ENCODE measurements at regions of chr19 and their contacts with region 1.

Region 1: DNA sequence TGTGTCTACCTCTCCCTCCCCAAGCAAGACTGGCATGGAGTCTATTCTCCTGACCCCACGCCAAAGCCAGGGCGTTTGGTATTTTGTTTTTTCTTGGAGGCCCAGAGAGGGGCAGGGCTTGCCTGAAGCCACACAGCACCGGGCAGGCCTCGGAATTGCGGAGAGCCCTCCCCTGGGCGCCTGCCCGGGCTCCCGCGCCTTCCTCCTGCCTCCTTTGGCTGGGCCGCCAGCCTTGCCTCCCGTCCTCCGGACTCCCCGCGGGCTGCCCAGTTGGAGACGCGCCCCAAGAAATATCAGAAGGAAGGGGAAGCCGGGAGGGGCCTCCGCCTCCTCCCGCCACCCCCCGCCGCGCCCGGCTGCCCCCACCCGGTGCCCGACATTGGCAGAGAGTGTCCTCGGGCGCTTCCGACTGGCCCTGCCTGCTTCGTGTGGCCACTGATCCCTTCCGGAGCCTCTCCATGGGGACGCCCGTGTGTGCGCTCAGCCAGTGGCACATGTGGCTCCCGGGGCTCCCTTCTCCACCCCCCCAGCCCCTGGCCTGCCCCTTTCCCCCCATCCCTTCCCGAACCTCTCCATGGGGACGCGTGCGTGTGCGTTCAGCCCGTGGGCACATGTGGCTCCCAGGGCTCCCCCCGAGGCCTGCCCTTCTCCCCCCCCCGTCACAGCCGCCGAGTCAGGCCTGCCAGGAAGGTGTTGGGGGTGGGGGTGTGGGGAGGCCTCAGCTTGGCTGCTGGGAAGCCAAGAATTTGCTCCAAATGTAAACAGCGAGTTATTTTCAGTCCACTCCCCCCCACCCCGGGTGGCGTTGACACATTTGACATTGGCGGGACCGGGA is 37.3 kb downstream of the NFIC start:
- DNase-seq: peak; percentile 92 to 98 (median 96)
- H3K4me3 ChIP-seq: peak overlapping the region in 1 of 4 donors; percentile 52
- H3K27ac ChIP-seq: peak overlapping the region; percentile 98 to 100 (median 99)
- H3K4me1 ChIP-seq: peaks cover 39 to 71% of the 10 kb centered on the region in 2 donors
- H3K27me3 ChIP-seq: no peaks in the 10 kb centered on the region
- CTCF ChIP-seq: no peak
- POLR2A ChIP-seq: peak in 1 of 2 donors; percentile 40

Region 2: DNA sequence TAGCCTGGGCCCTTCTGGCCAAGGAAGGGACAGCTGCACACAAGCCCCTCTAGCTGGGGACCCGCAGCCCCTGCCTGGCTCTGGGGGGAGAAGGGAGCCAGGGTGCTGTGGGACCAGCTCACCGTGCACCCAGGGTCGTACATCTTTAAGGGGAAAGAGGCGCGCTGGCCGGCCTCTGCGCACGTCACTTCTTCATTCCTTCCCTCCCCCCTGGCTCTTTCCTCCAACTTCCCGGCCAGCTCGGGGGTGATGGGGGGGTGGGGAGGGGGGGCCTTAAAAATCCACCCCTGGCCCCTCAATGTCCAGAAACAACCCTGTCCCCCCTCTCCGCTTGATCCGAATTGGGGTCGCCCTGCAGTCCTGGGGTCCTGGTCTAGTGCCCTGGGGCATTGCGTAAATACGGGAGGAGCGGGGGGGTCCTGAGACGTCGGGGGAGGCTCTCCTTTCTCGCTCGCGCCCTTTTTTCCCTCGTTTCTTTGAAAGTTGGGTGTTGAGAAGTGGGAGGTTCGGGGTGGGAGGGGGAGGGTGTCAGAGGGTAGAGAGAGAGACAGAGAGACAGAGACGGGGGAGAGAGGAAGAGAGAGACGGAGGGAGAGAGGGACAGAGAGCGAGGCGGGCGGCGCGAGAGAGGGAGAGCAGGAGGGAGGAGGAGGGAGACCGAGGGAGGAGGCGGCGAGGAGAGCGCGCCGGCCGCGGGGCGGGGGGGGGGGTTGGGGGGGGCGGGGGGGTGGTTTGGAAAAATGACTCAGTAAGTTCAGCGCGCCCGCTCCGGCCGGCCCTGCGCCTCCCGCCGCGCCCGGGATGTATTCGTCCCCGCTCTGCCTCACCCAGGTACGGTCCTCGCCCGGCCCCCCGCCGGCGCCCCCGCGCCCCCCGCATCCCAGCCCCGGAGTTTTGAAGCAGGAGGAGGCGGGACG is 37.6 kb before region 1 on chr19 and contains the start of gene NFIC:
- intact Hi-C with region 1: loop called in 1 of 2 experiments (anchors 5 kb)
- DNase-seq: peak; percentile 81 to 91 (median 85)
- H3K4me3 ChIP-seq: peak within 1 kb of the TSS; percentile 72 to 94 (median 83)
- H3K27ac ChIP-seq: peak within 1 kb of the TSS; percentile 95 to 100 (median 98)
- H3K4me1 ChIP-seq: peaks cover 48 to 58% of the 10 kb centered on the region in 2 donors
- H3K27me3 ChIP-seq: no peaks in the 10 kb centered on the region
- CTCF ChIP-seq: no peak
- POLR2A ChIP-seq: peak in 1 of 2 donors; percentile 57
- total RNA-seq, gene NFIC: 3.5 to 329 (median 214) TPM

Region 3: DNA sequence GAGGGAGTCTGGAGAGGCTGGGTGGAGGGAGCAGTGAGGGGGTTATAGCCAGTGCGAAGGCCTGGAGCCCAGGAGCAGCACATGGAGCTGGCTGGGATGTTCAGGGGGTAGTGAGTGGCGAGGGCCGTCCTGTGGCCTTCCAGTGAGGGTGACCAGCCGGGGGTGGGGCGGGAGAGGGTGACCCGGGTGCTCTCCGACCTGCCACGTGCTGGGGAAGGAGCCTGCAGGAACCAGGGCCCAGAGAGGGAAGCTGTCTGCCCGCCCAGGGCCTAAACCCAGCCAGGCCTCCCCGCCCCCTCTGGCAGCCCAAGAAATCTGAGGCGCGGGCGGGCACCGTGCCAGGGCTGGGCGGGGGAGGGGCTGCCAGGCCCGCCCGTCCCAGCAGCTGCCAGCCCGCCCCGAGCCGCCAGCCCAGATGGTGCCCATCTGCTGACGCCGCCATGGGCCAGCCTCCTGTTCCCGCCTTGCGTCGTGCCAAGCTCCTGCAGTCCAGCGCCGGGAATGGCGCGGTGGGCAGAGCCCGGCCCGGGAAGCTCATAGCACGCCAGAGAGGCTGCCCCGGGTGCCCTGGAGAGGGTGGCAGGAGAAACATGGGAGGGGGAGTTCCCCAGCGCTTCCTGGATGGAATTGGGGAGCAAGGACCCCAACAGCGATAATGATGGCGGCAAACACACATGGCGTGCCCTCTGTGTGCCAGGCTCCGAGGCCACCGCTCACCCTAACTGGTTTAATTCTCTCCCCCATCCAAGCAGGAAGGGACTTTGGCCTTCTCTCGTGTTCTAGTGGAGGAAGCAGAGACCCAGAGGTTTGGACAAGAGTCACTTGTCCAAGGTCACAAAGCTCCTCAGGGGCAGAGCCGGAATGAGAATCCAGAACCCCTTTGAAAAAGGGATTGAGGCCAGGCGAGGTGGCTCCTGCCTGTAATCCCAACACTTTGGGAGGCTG is 15.8 kb before region 1 on chr19:
- intact Hi-C with region 1: loop called in 1 of 2 experiments (anchors 2 kb)
- DNase-seq: peak; percentile 93 to 96 (median 94)
- H3K4me3 ChIP-seq: peak overlapping the region in 1 of 4 donors; percentile 23
- H3K27ac ChIP-seq: peak overlapping the region; percentile 71 to 95 (median 91)
- H3K4me1 ChIP-seq: peaks cover 69 to 80% of the 10 kb centered on the region in 2 donors
- H3K27me3 ChIP-seq: no peaks in the 10 kb centered on the region
- CTCF ChIP-seq: peak in 2 of 6 experiments; percentile 30 to 41
- POLR2A ChIP-seq: peak in 1 of 2 donors; percentile 51

Region 4: DNA sequence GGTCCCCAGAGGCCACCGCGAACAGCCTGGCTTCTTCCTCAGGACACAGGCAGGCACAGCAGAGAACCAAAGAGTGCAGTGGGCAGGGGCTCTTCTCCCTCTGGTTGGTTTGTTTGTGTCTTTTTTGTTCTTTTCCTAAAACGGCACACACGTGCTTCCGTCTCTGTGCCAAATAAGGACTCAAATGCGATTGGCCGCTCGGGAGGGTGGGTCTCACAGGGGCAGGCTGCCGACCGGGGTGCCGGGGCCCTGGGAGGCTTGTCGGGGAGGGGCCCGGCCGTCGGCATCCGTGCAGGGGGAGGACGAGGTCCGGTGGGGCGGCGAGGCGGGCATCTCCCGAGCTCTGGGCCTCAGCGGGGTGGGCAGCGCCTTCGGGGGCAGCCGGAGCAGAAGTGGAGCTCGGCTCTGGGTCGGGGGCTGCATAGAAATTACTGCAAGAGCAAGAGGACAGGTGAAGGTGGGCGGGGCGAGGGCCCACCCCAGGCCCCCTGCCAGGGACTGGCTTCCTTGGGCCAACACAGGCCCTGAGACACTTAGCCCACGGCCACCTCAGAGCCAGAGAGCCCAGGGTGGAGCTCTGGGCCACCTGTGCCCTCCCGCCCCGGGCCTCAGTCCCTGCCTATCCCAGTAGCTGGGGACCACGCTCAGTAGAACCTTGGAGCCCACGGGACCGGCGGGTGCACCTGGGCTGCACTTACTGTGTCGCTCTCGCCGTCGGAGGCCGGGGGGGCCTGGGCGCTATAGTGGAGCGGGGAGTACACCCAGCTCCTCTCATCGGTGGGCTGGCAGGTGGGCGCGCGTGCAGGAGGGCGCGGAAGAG is 229.2 kb after region 1 on chr19:
- intact Hi-C with region 1: no loop called
- DNase-seq: no peak
- H3K4me3 ChIP-seq: no peak overlapping the region
- H3K27ac ChIP-seq: no peak overlapping the region
- H3K4me1 ChIP-seq: no peaks in the 10 kb centered on the region
- H3K27me3 ChIP-seq: no peaks in the 10 kb centered on the region
- CTCF ChIP-seq: no peak
- POLR2A ChIP-seq: no peak